ENCODE measurements at regions of chr9 and their contacts with region 1.

Region 1: DNA sequence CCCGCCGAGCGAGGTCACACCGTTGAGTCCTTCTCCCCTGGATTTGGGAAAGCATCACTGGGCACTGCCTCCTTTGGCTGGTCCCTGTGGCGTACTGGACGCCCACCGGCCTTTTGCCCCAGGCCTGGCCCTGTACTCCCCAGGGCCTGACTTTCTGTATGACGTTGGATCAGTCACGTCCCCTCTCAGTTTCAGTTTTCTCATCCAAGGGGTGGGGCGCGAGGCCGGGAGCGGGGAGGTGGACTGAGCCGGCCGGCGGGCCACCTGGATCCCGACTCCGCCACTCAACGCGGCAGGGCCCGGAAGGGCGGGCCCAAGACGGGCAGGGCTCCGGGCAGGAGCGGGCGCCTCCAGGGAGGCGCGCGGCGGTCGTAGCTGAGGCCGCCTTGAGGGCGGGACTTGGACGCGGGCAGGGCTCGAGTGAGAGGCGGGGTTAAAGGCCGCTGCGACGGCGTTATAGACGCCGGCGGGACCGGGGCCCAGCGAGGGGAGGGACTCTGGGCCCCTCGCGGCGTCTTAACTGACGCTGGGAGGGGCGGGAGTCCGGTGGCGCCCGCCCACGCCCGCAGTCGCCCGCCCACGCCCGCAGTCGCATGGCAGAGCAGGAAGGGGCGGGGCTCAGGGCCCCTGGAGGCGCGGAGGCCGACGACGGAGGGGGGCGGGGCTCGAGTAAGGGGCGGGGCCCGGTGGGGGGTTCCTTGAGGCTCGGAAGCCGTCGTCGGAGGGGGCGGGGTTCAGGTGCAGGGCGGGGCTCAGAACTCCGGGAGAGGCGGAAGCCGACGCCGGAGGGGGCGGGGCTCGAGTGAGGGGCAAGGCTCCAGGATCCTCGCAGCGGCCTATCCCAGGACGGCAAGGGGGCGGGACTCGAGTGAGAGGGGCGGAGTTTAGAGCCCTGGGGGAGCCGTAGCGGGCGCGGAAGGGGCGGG is 549 bp upstream of the CARD19 start:
- DNase-seq: peak; percentile 100
- ATAC-seq: peak; percentile 82
- H3K4me3 Mint-ChIP-seq: peak overlapping the region; percentile 88
- H3K27ac Mint-ChIP-seq: peak overlapping the region; percentile 100
- H3K4me1 Mint-ChIP-seq: peaks cover 76% of the 10 kb centered on the region
- H3K27me3 Mint-ChIP-seq: no peaks in the 10 kb centered on the region

Region 2: GRCh38 chr9:93052791-93053568 is 42.5 kb before region 1 on chr9:
- CTCF ChIA-PET with region 1: no interaction called
- DNase-seq: no peak
- ATAC-seq: no peak
- H3K4me3 Mint-ChIP-seq: no peak overlapping the region
- H3K27ac Mint-ChIP-seq: no peak overlapping the region
- H3K4me1 Mint-ChIP-seq: peaks cover 14% of the 10 kb centered on the region
- H3K27me3 Mint-ChIP-seq: no peaks in the 10 kb centered on the region

Region 3: GRCh38 chr9:93064392-93065134 is 30.9 kb before region 1 on chr9:
- CTCF ChIA-PET with region 1: interaction called, 15 read pairs
- DNase-seq: peak; percentile 99
- ATAC-seq: peak; percentile 91
- H3K4me3 Mint-ChIP-seq: peak overlapping the region; percentile 71
- H3K27ac Mint-ChIP-seq: peak overlapping the region; percentile 98
- H3K4me1 Mint-ChIP-seq: peaks cover 77% of the 10 kb centered on the region
- H3K27me3 Mint-ChIP-seq: no peaks in the 10 kb centered on the region

Measured in activated CD8-positive, alpha-beta memory T cell treated with anti-CD3 and anti-CD28 coated beads, Interleukin-2, amount 10 ng/mL, durations not matched to agents 7 days and 5 days (primary cell).